ENCODE measurements at regions of chr17 and their contacts with region 1.

Region 1: DNA sequence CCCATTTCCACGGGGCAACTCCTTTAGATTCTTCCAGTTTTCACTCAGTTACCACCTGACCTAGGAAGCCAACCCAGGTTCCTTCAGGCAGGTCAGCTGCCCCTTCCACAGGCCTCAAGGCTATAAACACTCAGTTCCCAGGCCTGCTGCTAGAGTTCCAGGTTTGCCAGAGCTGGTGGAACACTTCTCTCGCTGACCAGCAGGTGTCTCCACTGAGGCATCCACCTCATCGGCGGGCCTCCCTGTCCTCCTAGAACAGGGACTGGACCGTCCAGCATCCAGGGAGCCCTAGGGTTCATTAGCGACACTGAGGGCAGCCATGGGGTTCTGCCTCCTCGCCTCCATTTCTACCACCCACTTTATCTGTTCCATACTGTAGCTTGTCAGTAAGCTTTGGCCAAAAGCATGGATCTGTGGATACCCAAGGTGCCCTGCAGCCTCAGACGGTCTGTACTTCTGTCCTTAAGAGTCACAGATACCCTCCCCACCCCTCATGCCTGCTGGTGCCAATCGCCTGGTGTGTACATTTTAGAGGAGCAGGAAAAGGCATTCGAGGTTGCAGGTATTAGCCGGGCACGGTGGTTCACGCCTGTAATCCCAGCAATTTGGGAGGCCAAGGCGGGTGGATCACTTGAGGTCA is 29.0 kb downstream of the PIMREG start:
- DNase-seq: peak; percentile 81 to 98
- ATAC-seq: peak; percentile 78 to 93
- H3K4me3 ChIP-seq: no peak overlapping the region
- H3K27ac ChIP-seq: peak overlapping the region; percentile 53 to 76; a peak in 5 of 6 replicates
- H3K4me1 ChIP-seq: peaks cover 24% of the 10 kb centered on the region
- CTCF ChIP-seq: peak; percentile 95
- EP300 ChIP-seq: no peak
- POLR2A ChIP-seq: no peak
- RAD21 ChIP-seq: peak; percentile 93

Region 2: DNA sequence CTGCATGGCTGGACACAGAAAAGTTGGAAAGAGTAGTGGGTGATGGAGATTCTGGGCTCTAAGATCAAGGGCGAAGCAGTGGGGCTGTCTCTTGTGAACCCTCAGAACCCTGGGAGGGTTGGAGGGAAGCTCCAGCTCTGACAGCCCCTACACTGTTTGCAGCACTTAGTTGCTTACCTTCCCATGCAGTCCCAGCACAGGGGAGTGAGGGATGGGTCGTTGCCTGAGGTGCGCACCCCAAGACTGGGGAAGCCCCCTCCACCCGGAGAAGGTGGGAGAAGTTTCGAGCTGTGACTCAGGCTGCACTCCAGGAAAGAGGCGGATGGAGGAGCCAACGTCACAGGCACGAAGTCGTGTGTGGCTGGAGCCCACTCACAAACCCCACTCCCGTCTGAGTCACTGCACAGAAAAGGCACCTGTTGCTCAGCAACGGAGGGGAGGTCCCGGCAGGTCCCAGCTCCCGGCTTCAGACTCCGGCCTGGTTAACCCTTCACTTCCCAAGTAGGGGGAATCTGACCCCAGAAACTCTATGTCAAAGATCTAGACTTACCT is 98.4 kb before region 1 on chr17:
- CTCF ChIA-PET with region 1: no interaction called
- POLR2A ChIA-PET with region 1: no interaction called
- DNase-seq: peak; percentile 66 to 86
- ATAC-seq: peak; percentile 88 to 92
- H3K4me3 ChIP-seq: no peak overlapping the region
- H3K27ac ChIP-seq: peak overlapping the region in 1 of 2 experiments; percentile 38; a peak in 5 of 6 replicates
- H3K4me1 ChIP-seq: peaks cover 18% of the 10 kb centered on the region
- CTCF ChIP-seq: no peak
- EP300 ChIP-seq: no peak
- POLR2A ChIP-seq: no peak
- RAD21 ChIP-seq: 0 out of 5 replicates have a peak, but pooled peaks have one; percentile 13 to 18

Region 3: DNA sequence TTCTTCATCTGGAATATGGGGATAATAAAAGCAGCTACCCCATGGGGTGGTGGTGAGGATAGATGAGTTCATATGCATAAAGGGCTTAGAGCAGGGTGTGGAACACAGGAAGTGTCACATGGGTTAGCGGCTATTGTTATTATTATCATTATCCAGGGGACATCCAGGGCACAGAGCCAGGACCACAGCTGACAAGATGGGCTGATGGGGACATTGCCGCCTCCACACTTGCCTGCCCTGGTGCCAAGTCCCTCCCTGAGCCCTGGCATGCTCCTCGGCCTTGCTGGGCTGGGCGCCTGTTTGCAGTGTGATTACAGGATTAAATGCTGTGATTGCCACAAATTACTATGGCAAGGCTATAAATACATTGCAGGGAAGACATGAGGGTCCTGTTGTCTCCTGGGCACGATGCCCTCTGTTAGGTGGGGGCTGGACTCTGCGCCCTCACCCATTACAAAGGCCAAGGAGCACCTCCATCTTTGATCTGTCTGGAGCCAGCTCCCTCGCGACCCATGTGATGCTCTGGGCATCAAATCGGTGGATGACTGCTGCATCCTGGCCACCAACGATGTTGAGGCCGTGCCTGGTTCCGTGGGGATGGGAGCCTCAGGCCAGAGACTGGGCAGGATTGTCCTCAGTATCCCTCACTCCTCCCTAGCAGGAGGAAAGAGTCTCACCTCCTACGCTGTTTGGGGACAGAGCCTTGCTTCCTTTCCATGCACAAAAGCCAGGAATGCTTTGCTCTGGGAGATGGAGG is 14.2 kb after region 1 on chr17:
- CTCF ChIA-PET with region 1: interaction called, 91 read pairs
- POLR2A ChIA-PET with region 1: no interaction called
- DNase-seq: no peak
- ATAC-seq: no peak
- H3K4me3 ChIP-seq: no peak overlapping the region
- H3K27ac ChIP-seq: no peak overlapping the region; a peak in 1 of 6 replicates
- H3K4me1 ChIP-seq: no peaks in the 10 kb centered on the region
- CTCF ChIP-seq: no peak
- EP300 ChIP-seq: no peak
- POLR2A ChIP-seq: no peak
- RAD21 ChIP-seq: no peak

Region 4: DNA sequence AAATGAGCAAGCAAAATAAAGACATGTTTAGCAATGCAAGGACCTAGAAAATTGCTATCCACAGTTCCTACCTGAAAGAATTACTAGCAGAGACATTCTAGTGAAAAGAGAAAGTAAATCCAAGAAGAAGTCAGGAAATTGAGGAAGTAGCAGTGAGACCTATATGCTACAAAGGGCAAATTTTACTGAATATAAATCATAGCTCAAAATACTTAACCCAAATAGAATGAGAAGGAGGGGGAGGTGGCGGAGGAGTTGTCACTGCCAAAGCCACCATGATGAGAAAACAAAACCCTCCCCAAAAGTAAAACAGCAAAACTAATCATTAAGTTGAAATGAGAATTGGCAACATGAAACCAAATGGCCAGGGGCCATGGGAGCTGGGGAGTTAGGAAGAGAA is 43.8 kb after region 1 on chr17:
- CTCF ChIA-PET with region 1: interaction called, 25 read pairs
- POLR2A ChIA-PET with region 1: no interaction called
- DNase-seq: no peak
- ATAC-seq: no peak
- H3K4me3 ChIP-seq: no peak overlapping the region
- H3K27ac ChIP-seq: no peak overlapping the region
- H3K4me1 ChIP-seq: peaks cover 3% of the 10 kb centered on the region; the same call in 1 of the 3 replicates
- CTCF ChIP-seq: no peak
- EP300 ChIP-seq: no peak
- POLR2A ChIP-seq: no peak
- RAD21 ChIP-seq: no peak

Region 5: GRCh38 chr17:6555331-6556120 is 82.3 kb after region 1 on chr17:
- CTCF ChIA-PET with region 1: interaction called, 105 read pairs
- POLR2A ChIA-PET with region 1: no interaction called
- DNase-seq: no peak
- ATAC-seq: peak; percentile 20 to 64; a peak in 5 of 6 replicates
- H3K4me3 ChIP-seq: peak overlapping the region; percentile 82
- H3K27ac ChIP-seq: peak overlapping the region; percentile 75 to 89
- H3K4me1 ChIP-seq: peaks cover 20% of the 10 kb centered on the region; the same call in 2 of the 3 replicates
- CTCF ChIP-seq: no peak
- EP300 ChIP-seq: no peak
- POLR2A ChIP-seq: no peak
- RAD21 ChIP-seq: no peak

Region 6: GRCh38 chr17:6591599-6592158 is 118.4 kb after region 1 on chr17:
- CTCF ChIA-PET with region 1: interaction called, 68 read pairs
- POLR2A ChIA-PET with region 1: no interaction called
- DNase-seq: peak; percentile 38 to 79
- ATAC-seq: peak; percentile 85 to 86
- H3K4me3 ChIP-seq: peak overlapping the region; percentile 29; the same call in 2 of the 3 replicates
- H3K27ac ChIP-seq: peak overlapping the region; percentile 90 to 98
- H3K4me1 ChIP-seq: peaks cover 29% of the 10 kb centered on the region
- CTCF ChIP-seq: no peak
- EP300 ChIP-seq: peak in 1 of 2 experiments; percentile 2; a peak in 1 of 5 replicates
- POLR2A ChIP-seq: no peak
- RAD21 ChIP-seq: peak in 1 of 2 experiments; percentile 26; a peak in 1 of 5 replicates

Region 7: GRCh38 chr17:6630390-6630789 is 157.1 kb after region 1 on chr17:
- CTCF ChIA-PET with region 1: interaction called, 10 read pairs
- POLR2A ChIA-PET with region 1: interaction called, 3 read pairs
- DNase-seq: no peak
- ATAC-seq: no peak
- H3K4me3 ChIP-seq: no peak overlapping the region
- H3K27ac ChIP-seq: no peak overlapping the region
- H3K4me1 ChIP-seq: peaks cover 12% of the 10 kb centered on the region; the same call in 2 of the 3 replicates
- CTCF ChIP-seq: no peak
- EP300 ChIP-seq: no peak
- POLR2A ChIP-seq: no peak
- RAD21 ChIP-seq: no peak

Region 8: DNA sequence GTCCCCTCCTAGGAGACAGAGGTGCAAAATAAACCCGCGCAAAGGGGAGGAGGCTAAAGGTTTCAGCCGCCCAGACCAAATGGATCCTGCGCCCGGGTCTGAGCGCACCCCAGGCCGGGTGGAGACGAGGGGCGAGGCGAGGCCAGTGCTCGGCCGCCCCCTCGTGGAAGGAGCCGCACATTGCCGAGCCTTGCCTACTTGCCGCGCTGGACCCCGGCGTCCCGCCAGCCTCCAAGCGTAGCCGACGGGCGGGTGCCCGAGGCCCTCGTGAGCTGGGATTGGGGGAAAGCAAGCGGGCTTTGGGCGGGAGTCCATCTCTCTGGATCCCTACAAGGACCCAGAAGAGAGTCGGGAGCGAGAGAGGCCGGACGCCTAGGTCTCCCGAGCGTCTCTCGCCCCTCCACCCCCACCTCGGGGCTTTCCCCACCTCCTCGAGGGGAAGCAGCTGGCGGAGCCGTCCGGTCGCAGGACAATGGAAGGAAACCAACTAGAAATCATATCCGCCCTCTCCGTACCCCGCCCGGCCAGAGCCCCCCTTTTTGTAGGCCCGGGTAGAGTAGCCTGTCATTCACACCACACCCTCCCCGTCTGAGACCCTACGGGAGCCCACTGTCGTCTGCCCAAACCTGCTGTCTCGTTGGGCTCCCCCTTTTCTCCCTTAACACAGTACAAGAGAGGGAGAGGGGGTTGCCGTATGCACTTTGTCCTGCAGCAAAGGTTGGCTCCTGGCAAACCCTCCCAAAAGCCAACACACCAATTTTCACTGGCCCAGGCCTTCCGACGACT is 548.9 kb after region 1 on chr17:
- CTCF ChIA-PET with region 1: interaction called, 13 read pairs
- POLR2A ChIA-PET with region 1: no interaction called
- DNase-seq: peak; percentile 78 to 95
- ATAC-seq: peak; percentile 60 to 83
- H3K4me3 ChIP-seq: no peak overlapping the region
- H3K27ac ChIP-seq: peak overlapping the region; percentile 42 to 71; a peak in 5 of 6 replicates
- H3K4me1 ChIP-seq: peaks cover 24% of the 10 kb centered on the region
- CTCF ChIP-seq: peak; percentile 91
- EP300 ChIP-seq: no peak
- POLR2A ChIP-seq: no peak
- RAD21 ChIP-seq: peak; percentile 82 to 88